Activated naive CD4-positive, alpha-beta T cell treated with anti-CD3 and anti-CD28 coated beads, Interleukin-2, amount 10 ng/mL, durations not matched to agents 7 days and 5 days (primary cell): ENCODE measurements at regions of chr3 and their contacts with region 1.

Region 1: GRCh38 chr3:119891944-119892721 is 110.2 kb downstream of the NR1I2 start:
- DNase-seq: peak; percentile 54
- H3K4me3 Mint-ChIP-seq: no peak overlapping the region
- H3K27ac Mint-ChIP-seq: no peak overlapping the region
- H3K4me1 Mint-ChIP-seq: peaks cover 8% of the 10 kb centered on the region
- H3K27me3 Mint-ChIP-seq: no peaks in the 10 kb centered on the region

Region 2: GRCh38 chr3:120147072-120147871 is 255.1 kb after region 1 on chr3:
- CTCF ChIA-PET with region 1: interaction called, 47 read pairs
- DNase-seq: peak; percentile 64
- H3K4me3 Mint-ChIP-seq: no peak overlapping the region
- H3K27ac Mint-ChIP-seq: no peak overlapping the region
- H3K4me1 Mint-ChIP-seq: peaks cover 17% of the 10 kb centered on the region
- H3K27me3 Mint-ChIP-seq: no peaks in the 10 kb centered on the region

Region 3: GRCh38 chr3:120182724-120183524 is 290.8 kb after region 1 on chr3:
- CTCF ChIA-PET with region 1: interaction called, 11 read pairs
- DNase-seq: no peak
- H3K4me3 Mint-ChIP-seq: no peak overlapping the region
- H3K27ac Mint-ChIP-seq: no peak overlapping the region
- H3K4me1 Mint-ChIP-seq: no peaks in the 10 kb centered on the region
- H3K27me3 Mint-ChIP-seq: peaks cover 11% of the 10 kb centered on the region